ENCODE measurements at regions of chr1 and their contacts with region 1.

Region 1: GRCh38 chr1:21368515-21369289 is 71.2 kb upstream of the NBPF3 start:
- DNase-seq: peak; percentile 77
- ATAC-seq: peak; percentile 97
- H3K4me3 ChIP-seq: no peak overlapping the region
- H3K27ac ChIP-seq: no peak overlapping the region
- H3K4me1 ChIP-seq: peaks cover 0 to 11% of the 10 kb centered on the region in 2 experiments; a peak in 2 of 4 replicates
- H3K27me3 ChIP-seq: no peaks in the 10 kb centered on the region
- CTCF ChIP-seq: peak; percentile 98 to 100 (median 99)
- POLR2A ChIP-seq: no peak
- RAD21 ChIP-seq: peak; percentile 100

Region 2: DNA sequence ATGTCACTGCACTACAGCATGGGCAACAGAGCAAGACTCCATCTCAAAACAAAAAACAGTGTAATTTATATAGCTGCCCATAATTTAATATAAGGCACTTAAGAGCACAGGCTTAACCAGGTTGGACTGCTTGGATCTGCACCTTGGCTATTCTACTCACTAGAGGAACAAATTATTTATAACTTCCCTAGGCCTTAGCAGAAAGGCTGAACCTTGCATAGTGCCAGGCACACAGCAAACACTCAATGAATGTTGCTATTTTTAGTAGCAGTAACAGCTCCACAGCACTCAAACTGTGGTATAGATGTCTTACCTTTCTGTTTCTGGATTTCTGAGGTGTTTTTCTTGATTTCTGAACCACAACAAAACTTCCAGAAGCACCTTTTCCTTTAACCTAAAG is 601.4 kb before region 1 on chr1:
- CTCF ChIA-PET with region 1: no interaction called
- POLR2A ChIA-PET with region 1: no interaction called
- RAD21 ChIA-PET with region 1: no interaction called
- intact Hi-C with region 1: no loop called
- DNase-seq: no peak
- ATAC-seq: no peak
- H3K4me3 ChIP-seq: no peak overlapping the region
- H3K27ac ChIP-seq: no peak overlapping the region
- H3K4me1 ChIP-seq: no peaks in the 10 kb centered on the region
- H3K27me3 ChIP-seq: no peaks in the 10 kb centered on the region
- CTCF ChIP-seq: no peak
- POLR2A ChIP-seq: no peak
- RAD21 ChIP-seq: no peak

Region 3: DNA sequence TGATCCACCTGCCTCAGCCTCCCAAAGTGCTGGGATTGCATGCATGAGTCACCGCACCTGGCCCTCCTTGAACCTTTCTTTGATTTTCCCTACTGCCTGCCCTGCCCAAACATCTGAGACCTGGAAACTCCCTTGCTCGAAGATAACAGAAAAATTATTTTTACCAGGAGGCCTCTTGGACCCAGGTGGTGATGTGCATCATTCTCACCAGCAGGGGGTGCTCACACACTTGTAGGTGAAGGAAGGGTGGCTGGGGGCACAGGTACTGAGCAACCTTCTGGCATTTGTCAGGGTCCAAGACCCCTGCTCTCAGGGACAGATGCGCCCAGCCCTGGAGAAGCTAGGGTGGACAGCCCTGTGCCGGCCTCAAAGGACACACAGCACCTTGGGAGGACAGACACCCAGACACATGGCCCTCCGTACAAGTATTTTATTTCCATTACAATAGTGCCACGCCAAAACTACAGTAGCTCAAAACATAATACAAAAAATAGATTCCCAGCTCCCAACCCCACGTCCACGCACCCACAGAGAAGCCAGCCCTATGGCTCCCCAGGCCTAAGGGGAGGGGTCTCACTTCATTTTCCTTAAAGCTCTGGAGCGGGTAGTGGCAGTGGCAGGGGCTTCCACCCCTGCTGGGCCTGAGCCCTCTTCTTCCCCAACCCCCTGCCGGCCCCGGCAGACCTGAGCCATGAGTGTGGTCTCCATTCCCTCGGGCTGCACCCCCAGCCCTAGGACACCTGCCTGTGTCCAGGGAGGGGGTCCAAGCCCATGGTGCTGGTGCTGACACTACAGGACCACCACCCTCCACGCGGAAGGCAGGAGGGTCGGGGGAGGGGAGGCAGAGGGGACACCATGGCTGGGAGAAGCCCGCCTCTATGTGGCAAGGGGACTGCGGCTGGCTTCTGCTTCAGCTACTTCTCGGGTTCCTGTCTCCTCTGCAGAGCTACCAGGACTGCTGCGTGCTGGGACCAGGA is 151.6 kb before region 1 on chr1:
- CTCF ChIA-PET with region 1: interaction called, 53 read pairs
- POLR2A ChIA-PET with region 1: no interaction called
- RAD21 ChIA-PET with region 1: interaction called, 4 to 13 read pairs
- intact Hi-C with region 1: loop called (anchors 5 kb)
- DNase-seq: peak; percentile 38
- ATAC-seq: peak; percentile 76
- H3K4me3 ChIP-seq: no peak overlapping the region
- H3K27ac ChIP-seq: no peak overlapping the region
- H3K4me1 ChIP-seq: peaks cover 2 to 7% of the 10 kb centered on the region in 2 experiments; a peak in 2 of 4 replicates
- H3K27me3 ChIP-seq: no peaks in the 10 kb centered on the region
- CTCF ChIP-seq: peak; percentile 50 to 95 (median 87); a peak in 5 of 6 replicates
- POLR2A ChIP-seq: no peak
- RAD21 ChIP-seq: peak; percentile 67

Region 4: DNA sequence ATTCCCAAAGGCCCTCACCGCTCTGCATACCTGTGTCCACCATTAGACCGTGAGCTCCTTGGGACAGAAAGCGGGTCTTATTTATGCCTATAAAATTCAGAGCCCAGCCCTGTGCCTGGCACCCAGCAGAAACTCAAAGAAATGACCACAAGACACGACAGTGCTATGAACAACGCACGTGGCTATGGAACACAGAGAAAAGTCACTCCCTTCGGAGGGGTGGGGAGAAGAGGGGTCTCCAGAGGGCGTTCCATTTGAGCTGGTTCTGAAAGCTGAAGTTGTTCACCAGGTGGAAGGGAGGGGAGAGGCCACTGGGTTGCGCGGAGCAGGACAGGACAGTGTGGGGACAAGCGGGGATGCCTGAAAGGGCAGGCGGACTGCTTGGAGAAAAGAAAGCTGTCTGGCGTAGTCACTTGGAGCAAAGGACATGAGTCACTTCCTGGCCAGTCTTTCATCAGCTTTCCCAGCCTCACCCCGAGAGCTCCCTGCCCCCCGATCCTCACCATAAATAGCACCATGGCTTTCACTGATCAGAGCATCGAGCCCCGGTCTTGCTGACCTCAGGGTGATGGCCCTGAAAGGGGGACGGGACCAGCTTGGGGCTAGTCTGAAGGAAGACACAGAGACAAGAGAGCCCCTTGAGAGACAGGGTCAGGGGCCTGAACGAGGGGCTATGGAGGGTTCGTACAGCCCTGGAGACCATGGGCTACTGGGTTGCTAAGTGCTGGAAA is 107.0 kb before region 1 on chr1:
- CTCF ChIA-PET with region 1: interaction called, 12 read pairs
- POLR2A ChIA-PET with region 1: no interaction called
- RAD21 ChIA-PET with region 1: interaction called in 1 of 2 experiments, 9 read pairs
- intact Hi-C with region 1: no loop called
- DNase-seq: peak; percentile 64
- ATAC-seq: peak; percentile 80
- H3K4me3 ChIP-seq: peak overlapping the region; percentile 14 to 48
- H3K27ac ChIP-seq: peak overlapping the region; percentile 57
- H3K4me1 ChIP-seq: peaks cover 24 to 28% of the 10 kb centered on the region in 2 experiments
- H3K27me3 ChIP-seq: no peaks in the 10 kb centered on the region
- CTCF ChIP-seq: no peak
- POLR2A ChIP-seq: no peak
- RAD21 ChIP-seq: no peak

Region 5: DNA sequence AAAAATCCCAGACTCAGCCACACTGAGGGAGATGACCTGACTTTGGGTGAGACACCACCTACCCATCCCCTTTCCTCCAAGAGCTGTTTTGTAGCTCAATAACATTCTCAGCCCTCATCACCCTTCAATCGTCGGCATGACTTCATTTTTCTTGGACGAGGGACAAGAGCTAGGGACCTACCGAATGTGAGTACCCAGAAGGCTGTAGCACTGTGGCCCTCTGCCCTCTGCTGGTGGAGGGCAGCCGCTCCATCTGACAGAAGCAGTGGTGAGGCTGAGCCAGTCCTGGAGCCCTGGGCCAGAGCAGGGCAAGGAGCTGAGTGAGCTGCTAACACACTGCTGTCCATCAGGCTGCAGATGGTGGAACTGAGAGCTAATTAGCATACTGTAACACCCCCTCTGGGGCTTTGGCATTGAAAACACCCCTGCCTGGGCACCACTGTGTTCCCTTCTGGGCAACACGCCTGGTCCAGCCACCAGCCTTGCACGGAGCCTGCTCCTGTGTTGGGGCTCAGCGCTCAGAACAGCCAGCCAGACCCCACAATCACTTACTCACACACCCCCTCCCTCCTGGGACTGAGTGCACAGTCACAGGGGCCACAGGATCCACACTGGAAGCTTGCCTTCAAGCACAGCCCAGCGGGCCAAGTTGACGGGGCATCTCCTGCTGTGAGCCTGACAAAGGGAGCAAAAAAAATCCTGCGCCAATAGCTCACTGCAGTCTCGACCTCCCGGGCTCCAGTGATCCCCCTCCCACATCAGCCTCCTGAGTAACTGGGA is 122.3 kb after region 1 on chr1:
- CTCF ChIA-PET with region 1: interaction called, 13 read pairs
- POLR2A ChIA-PET with region 1: no interaction called
- RAD21 ChIA-PET with region 1: interaction called, 3 to 4 read pairs
- intact Hi-C with region 1: loop called (anchors 10 kb)
- DNase-seq: no peak
- ATAC-seq: peak; percentile 78
- H3K4me3 ChIP-seq: no peak overlapping the region
- H3K27ac ChIP-seq: no peak overlapping the region
- H3K4me1 ChIP-seq: peaks cover 0 to 11% of the 10 kb centered on the region in 2 experiments; a peak in 1 of 4 replicates
- H3K27me3 ChIP-seq: no peaks in the 10 kb centered on the region
- CTCF ChIP-seq: peak; percentile 32 to 63 (median 59); a peak in 5 of 6 replicates
- POLR2A ChIP-seq: no peak
- RAD21 ChIP-seq: peak; percentile 66

Region 6: GRCh38 chr1:21573971-21574465 is 205.3 kb after region 1 on chr1:
- CTCF ChIA-PET with region 1: interaction called, 14 read pairs
- POLR2A ChIA-PET with region 1: no interaction called
- RAD21 ChIA-PET with region 1: no interaction called
- intact Hi-C with region 1: loop called (anchors 1 kb)
- DNase-seq: peak; percentile 53
- ATAC-seq: peak; percentile 87
- H3K4me3 ChIP-seq: no peak overlapping the region
- H3K27ac ChIP-seq: no peak overlapping the region
- H3K4me1 ChIP-seq: peaks cover 12 to 18% of the 10 kb centered on the region in 2 experiments; a peak in 3 of 4 replicates
- H3K27me3 ChIP-seq: no peaks in the 10 kb centered on the region
- CTCF ChIP-seq: peak; percentile 68 to 84 (median 72)
- POLR2A ChIP-seq: no peak
- RAD21 ChIP-seq: peak; percentile 94

Region 7: DNA sequence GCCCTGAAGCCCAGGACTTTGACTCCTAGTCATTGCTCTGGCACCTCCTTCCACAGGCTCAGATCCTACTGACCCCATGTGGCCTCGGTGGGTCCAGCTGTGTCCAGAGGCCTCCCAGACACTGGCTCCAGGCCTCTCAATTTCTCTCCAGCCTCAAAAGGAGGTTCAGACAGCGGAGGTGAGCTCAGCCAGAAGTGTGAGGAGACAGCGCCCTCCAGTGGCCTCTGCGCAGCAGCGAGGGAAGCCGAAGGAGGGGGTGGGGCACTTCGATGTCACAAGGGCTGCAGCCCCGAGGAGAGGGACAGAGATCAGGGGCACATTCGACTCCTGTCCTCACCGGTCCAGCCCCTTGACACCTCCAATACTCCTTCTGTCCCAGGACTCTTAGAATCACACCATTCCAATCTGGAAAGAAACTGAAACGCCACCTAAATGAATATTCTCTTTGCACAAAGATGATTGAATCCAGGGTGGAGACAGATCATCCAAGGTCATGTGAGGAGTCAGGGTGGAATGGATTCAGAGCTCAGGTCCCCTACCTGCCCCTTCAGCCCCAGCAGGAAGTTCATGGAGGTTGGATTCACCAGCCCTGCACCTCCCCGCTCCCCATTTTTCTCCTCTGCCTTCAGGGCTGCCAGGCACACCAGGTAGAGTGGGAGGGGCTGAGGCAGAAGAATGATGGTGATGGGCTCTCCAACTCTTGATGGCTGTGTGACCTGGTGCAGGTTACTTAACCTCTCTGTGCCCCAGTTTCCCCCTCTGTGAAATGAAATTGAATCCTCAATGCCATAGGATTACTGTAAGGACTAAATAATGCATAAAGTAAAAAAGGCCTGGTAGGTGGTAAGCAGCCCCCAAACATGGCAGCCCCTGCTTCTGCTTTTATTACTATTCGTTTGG is 1048.1 kb after region 1 on chr1:
- CTCF ChIA-PET with region 1: interaction called, 17 read pairs
- POLR2A ChIA-PET with region 1: no interaction called
- RAD21 ChIA-PET with region 1: interaction called, 5 read pairs
- intact Hi-C with region 1: loop called (anchors 2 kb)
- DNase-seq: peak; percentile 61
- ATAC-seq: peak; percentile 78
- H3K4me3 ChIP-seq: no peak overlapping the region
- H3K27ac ChIP-seq: no peak overlapping the region
- H3K4me1 ChIP-seq: peaks cover 16 to 38% of the 10 kb centered on the region in 2 experiments
- H3K27me3 ChIP-seq: no peaks in the 10 kb centered on the region
- CTCF ChIP-seq: peak; percentile 88 to 97 (median 96)
- POLR2A ChIP-seq: no peak
- RAD21 ChIP-seq: peak; percentile 98

Measured in HCT116 (cell line).